ENCODE measurements at regions of chr22 and their contacts with region 1.

Region 1: GRCh38 chr22:44311855-44312170 is 938 bp downstream of the SHISAL1 start:
- DNase-seq: no peak

Region 2: GRCh38 chr22:43151251-43152002 is 1160.4 kb before region 1 on chr22 and contains the start of gene TSPO:
- intact Hi-C with region 1: loop called in 1 of 2 experiments (anchors 5 kb)
- DNase-seq: peak; percentile 93
- total RNA-seq, gene TSPO: 75.1 to 84.3 TPM

Region 3: GRCh38 chr22:44363272-44363979 is 51.6 kb after region 1 on chr22:
- intact Hi-C with region 1: loop called in 1 of 2 experiments (anchors 5 kb)
- DNase-seq: peak; percentile 99

Region 4: GRCh38 chr22:44391481-44392445 is 80.0 kb after region 1 on chr22:
- intact Hi-C with region 1: no loop called
- DNase-seq: peak; percentile 63